Activated T-helper 1 cell treated with anti-CD3 and anti-CD28 coated beads, Interleukin-12 subunit alpha, Interleukin-12 subunit beta, Interleukin-2, Interleukin-4 antibody, amounts not matched to agents 30 ng/mL and 10 ng/mL and 1 ng/mL, durations not matched to agents 14 hours and 24 hours and 36 hours (primary cell): ENCODE measurements at regions of chr2 and their contacts with region 1.

Region 1: GRCh38 chr2:33372940-33373553 is 103.4 kb upstream of the RASGRP3 start:
- DNase-seq: no peak
- H3K4me3 Mint-ChIP-seq: no peak overlapping the region
- H3K27ac Mint-ChIP-seq: no peak overlapping the region
- H3K4me1 Mint-ChIP-seq: no peaks in the 10 kb centered on the region
- H3K27me3 Mint-ChIP-seq: no peaks in the 10 kb centered on the region

Region 2: DNA sequence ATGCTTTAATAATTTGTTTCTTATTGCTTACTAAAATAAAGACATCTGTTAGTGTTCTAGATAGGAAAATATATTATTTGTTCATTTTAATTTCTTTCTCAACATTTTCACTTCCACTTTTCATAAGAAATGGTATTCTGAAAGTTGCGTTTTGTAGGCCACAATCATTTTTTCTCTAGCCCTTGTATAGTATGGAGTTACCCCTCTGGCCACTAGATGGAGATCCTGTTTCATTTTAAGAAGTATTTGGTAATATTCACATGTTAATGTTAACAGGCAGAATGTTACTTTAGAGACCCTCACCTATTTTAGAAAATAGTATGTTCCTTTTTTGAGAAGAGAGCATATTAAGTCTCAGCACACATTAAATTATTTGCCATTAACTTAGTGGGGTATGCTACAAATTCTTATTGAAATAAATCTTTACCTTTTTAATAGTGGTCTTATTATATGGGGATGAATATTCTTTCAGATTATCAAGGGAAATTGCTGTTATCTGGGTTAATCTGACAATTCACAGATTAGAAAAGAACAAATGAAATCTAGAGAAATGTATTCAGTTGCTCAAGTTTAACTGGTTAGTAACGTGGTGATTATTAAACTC is 819.1 kb before region 1 on chr2:
- intact Hi-C with region 1: loop called (anchors 1 kb)
- DNase-seq: no peak
- H3K4me3 Mint-ChIP-seq: no peak overlapping the region
- H3K27ac Mint-ChIP-seq: no peak overlapping the region
- H3K4me1 Mint-ChIP-seq: no peaks in the 10 kb centered on the region
- H3K27me3 Mint-ChIP-seq: no peaks in the 10 kb centered on the region

Region 3: GRCh38 chr2:32772638-32773447 is 600.2 kb before region 1 on chr2:
- intact Hi-C with region 1: loop called (anchors 1 kb)
- DNase-seq: no peak
- H3K4me3 Mint-ChIP-seq: no peak overlapping the region
- H3K27ac Mint-ChIP-seq: no peak overlapping the region
- H3K4me1 Mint-ChIP-seq: no peaks in the 10 kb centered on the region
- H3K27me3 Mint-ChIP-seq: no peaks in the 10 kb centered on the region

Region 4: DNA sequence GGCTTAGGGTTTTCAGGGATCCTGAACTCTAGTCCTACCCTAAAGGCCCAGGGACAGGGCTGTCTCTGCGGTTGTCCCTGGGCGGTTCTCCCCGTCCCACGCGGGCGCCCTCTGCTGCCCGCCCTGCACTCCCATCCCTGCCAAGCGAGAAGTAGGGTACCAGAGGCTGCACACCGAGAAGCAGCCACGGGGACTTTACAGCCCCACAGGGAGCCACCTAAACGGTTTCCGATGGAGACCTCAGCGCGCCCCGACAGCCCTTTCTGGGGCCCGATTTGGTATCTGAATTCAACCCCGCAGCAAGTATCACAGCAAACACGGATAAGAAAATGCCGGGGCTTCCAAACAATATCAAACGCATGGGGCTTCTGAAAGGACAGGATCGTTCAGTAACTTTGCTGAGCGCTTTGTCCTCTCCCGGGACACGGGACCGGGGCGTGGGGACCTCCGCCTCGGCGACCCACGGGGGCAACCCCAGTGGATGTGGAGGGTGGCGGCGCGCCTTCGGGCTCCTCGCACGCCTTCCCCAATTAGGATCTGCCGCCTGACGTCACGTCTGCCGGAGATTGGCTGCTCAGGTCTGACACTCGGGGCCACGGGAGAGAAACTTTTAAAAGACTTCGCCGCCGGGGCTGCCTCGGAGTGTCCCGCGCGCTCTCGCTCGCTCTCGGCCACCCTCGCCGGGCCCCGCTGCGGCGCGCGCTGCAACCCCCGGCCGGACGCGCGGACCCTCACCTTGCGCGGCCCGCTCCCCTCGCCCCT is 426.6 kb before region 1 on chr2 and contains the start of gene LTBP1:
- intact Hi-C with region 1: loop called (anchors 5 kb)
- DNase-seq: peak; percentile 68
- H3K4me3 Mint-ChIP-seq: peak within 1 kb of the TSS; percentile 84
- H3K27ac Mint-ChIP-seq: no peak within 1 kb of the TSS
- H3K4me1 Mint-ChIP-seq: peaks cover under 1% of the 10 kb centered on the region
- H3K27me3 Mint-ChIP-seq: peaks cover 30% of the 10 kb centered on the region
- total RNA-seq, gene LTBP1: 0.12 and 0.26 TPM in 2 replicates

Region 5: DNA sequence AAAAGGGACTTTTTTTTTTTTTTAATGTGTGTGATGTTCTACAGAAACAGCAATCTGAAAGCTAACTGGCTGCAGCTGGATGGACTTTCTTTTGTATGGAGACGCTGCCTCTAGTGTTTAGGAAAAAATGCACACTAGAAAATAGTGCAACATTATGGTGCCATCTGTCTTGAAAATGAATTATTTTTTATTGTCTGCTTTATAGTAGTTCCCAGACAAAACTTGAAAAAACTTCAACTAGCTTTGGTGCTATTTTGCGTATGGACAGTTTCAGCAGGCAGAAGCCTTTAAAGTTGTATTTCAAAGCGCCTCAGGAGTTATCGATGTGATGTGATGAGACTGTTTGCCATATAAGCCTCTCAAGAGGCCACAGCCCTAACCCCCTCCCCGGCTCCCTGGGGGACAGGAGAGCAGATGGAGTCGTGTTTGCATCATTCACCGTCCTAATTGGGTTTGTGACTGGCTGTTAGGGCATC is 339.4 kb before region 1 on chr2:
- intact Hi-C with region 1: loop called (anchors 2 kb)
- DNase-seq: no peak
- H3K4me3 Mint-ChIP-seq: no peak overlapping the region
- H3K27ac Mint-ChIP-seq: no peak overlapping the region
- H3K4me1 Mint-ChIP-seq: no peaks in the 10 kb centered on the region
- H3K27me3 Mint-ChIP-seq: peaks cover 4% of the 10 kb centered on the region

Region 6: GRCh38 chr2:33208400-33208799 is 164.6 kb before region 1 on chr2:
- intact Hi-C with region 1: loop called (anchors 1 kb)
- DNase-seq: no peak
- H3K4me3 Mint-ChIP-seq: no peak overlapping the region
- H3K27ac Mint-ChIP-seq: no peak overlapping the region
- H3K4me1 Mint-ChIP-seq: no peaks in the 10 kb centered on the region
- H3K27me3 Mint-ChIP-seq: no peaks in the 10 kb centered on the region

Region 7: DNA sequence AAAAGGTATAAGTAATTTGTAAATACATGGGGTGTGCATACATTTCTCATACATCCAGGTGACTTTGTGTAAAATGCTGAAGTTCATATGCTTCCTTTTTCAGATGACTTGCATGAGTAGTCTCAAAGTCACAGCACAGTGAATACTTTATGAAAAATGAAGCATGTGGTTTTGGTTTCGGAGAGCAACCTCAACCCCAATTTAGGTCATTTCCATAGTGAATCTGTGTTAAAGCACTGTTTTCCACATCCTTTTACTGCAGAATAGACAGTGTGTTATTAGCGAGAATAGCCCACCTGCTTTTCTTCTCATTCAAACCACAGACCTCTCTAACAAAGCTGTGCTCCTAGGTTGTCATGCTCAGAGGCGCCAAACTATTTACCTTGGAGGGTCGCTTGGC is 101.0 kb before region 1 on chr2:
- intact Hi-C with region 1: loop called (anchors 5 kb)
- DNase-seq: no peak
- H3K4me3 Mint-ChIP-seq: no peak overlapping the region
- H3K27ac Mint-ChIP-seq: no peak overlapping the region
- H3K4me1 Mint-ChIP-seq: peaks cover 8% of the 10 kb centered on the region
- H3K27me3 Mint-ChIP-seq: peaks cover 17% of the 10 kb centered on the region

Region 8: DNA sequence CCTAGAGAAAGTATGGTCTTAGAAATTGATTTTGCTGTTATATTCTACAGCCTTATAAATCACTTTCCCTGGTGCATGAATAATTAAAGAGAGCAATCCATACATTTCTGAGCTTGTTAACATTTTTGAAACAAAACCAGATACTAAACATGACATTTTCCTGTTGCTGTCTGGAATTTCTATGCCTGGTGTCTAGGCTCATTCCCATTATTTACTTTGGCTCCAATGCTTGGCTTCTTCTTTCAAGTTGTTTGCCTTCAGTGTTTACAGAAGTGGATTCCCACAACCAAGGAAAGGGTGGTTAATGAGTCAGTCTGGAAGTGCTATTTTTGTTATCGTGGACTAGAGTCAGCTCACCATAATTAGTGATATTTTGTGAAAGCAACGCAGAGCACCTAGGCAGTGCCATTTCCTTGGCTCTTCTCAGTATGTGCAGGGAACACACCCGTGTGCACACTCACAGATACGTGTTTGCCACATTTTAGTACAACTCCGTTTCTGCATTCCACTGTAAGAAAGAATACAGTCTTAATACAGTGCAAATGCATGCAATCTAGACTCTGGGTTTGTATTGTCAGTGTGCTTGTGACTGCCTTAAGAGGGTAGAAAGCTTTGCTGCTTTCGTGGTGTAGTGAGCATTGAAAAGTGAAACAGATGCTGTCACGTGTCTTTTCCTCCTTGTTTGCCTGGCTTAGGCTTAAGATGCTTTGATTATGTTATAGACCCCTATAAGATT is 81.6 kb before region 1 on chr2:
- intact Hi-C with region 1: no loop called
- DNase-seq: no peak
- H3K4me3 Mint-ChIP-seq: no peak overlapping the region
- H3K27ac Mint-ChIP-seq: no peak overlapping the region
- H3K4me1 Mint-ChIP-seq: no peaks in the 10 kb centered on the region
- H3K27me3 Mint-ChIP-seq: peaks cover 4% of the 10 kb centered on the region